A673 (cell line): ENCODE measurements at regions of chr21 and their contacts with region 1.

Region 1: DNA sequence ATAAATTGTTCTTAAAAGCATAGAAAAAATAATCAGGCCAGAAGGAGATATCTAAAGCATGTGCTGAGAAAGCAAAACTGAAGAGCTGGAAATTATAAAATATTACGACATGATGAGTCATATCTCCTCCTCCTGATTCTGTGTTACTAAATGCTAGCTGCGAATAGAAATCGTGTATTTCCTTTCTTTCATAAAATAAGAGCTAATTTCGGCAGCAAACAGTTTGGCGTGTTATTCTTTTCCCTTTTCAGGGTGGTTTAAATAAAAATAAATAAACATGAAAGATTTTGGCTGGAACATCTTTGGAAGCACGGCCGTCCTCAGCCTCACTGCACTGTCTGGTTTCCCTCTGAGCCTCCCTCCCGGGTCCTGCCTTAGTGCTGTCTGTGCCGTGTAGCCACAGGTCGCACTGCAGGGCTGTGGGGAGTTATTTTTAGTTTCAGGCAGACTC is 56.0 kb downstream of the ADARB1 start:
- DNase-seq: peak; percentile 68
- H3K4me3 ChIP-seq: peak overlapping the region; percentile 27
- H3K27ac ChIP-seq: peak overlapping the region; percentile 79
- H3K4me1 ChIP-seq: peaks cover 48% of the 10 kb centered on the region
- H3K27me3 ChIP-seq: no peaks in the 10 kb centered on the region
- CTCF ChIP-seq: no peak

Region 2: DNA sequence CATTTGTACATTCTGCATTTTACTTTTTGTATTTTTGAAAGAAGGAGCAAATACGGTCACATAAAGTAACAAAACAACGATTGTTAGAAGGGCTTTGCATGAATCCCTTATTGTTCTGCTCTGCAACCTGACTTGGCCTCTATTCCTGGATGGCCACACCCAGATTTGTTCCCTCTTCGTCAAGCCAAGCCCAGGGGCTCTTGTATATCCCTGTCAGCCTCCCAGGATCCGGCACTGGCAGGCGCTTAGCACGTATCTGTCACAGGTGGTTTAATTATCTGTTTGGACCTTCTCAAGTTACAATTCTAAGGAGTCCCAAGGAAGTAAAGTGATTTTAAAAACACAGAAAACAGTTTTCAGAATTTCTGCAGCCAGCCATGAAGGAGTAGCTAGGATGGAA is 1933.5 kb before region 1 on chr21:
- CTCF ChIA-PET with region 1: interaction called, 11 read pairs
- POLR2A ChIA-PET with region 1: no interaction called
- intact Hi-C with region 1: no loop called
- DNase-seq: no peak
- H3K4me3 ChIP-seq: no peak overlapping the region
- H3K27ac ChIP-seq: no peak overlapping the region
- H3K4me1 ChIP-seq: no peaks in the 10 kb centered on the region
- H3K27me3 ChIP-seq: no peaks in the 10 kb centered on the region
- CTCF ChIP-seq: no peak

Region 3: GRCh38 chr21:44801468-44802395 is 328.6 kb before region 1 on chr21 and contains the start of gene UBE2G2:
- CTCF ChIA-PET with region 1: no interaction called
- POLR2A ChIA-PET with region 1: no interaction called
- intact Hi-C with region 1: loop called (anchors 5 kb)
- DNase-seq: peak; percentile 93
- H3K4me3 ChIP-seq: peak within 1 kb of the TSS; percentile 67
- H3K27ac ChIP-seq: peak within 1 kb of the TSS; percentile 93
- H3K4me1 ChIP-seq: peaks cover 23% of the 10 kb centered on the region
- H3K27me3 ChIP-seq: no peaks in the 10 kb centered on the region
- CTCF ChIP-seq: no peak
- total RNA-seq, gene UBE2G2: 204 and 212 TPM in 2 replicates

Region 4: DNA sequence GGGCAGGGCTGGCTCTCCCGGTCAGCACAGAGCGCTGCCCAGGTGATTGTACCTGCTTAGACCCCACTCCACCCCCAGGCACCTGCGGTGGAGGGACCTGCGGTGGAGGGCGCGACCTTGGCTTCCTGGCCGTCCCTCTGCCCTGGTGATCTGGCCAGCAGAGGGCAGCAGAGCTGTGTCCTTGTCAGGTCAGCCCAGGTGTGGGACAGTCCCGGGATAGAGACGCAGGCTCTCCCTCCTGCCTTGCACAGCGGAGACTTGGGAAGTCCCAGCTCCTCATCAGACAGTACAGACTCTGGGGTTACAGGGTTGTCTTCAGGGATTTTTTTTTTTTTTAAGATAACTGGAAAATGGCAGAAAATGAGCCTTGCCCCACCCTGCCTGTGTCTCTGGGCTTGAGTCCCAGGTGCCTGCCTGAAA is 180.6 kb before region 1 on chr21:
- CTCF ChIA-PET with region 1: interaction called, 10 read pairs
- POLR2A ChIA-PET with region 1: no interaction called
- intact Hi-C with region 1: loop called (anchors 5 kb)
- DNase-seq: no peak
- H3K4me3 ChIP-seq: no peak overlapping the region
- H3K27ac ChIP-seq: no peak overlapping the region
- H3K4me1 ChIP-seq: peaks cover 13% of the 10 kb centered on the region
- H3K27me3 ChIP-seq: no peaks in the 10 kb centered on the region
- CTCF ChIP-seq: peak; percentile 81

Region 5: GRCh38 chr21:44958471-44959191 is 171.7 kb before region 1 on chr21:
- CTCF ChIA-PET with region 1: interaction called, 4 read pairs
- POLR2A ChIA-PET with region 1: no interaction called
- intact Hi-C with region 1: loop called (anchors 5 kb)
- DNase-seq: peak; percentile 90
- H3K4me3 ChIP-seq: no peak overlapping the region
- H3K27ac ChIP-seq: peak overlapping the region; percentile 69
- H3K4me1 ChIP-seq: peaks cover 47% of the 10 kb centered on the region
- H3K27me3 ChIP-seq: no peaks in the 10 kb centered on the region
- CTCF ChIP-seq: no peak

Region 6: GRCh38 chr21:45076245-45076711 is 54.1 kb before region 1 on chr21:
- CTCF ChIA-PET with region 1: interaction called, 4 read pairs
- POLR2A ChIA-PET with region 1: no interaction called
- intact Hi-C with region 1: loop called (anchors 2 kb)
- DNase-seq: peak; percentile 12
- H3K4me3 ChIP-seq: peak overlapping the region; percentile 63
- H3K27ac ChIP-seq: no peak overlapping the region
- H3K4me1 ChIP-seq: peaks cover 11% of the 10 kb centered on the region
- H3K27me3 ChIP-seq: no peaks in the 10 kb centered on the region
- CTCF ChIP-seq: no peak

Region 7: GRCh38 chr21:45102391-45102932 is 27.9 kb before region 1 on chr21:
- CTCF ChIA-PET with region 1: interaction called, 10 read pairs
- POLR2A ChIA-PET with region 1: no interaction called
- intact Hi-C with region 1: no loop called
- DNase-seq: peak; percentile 91
- H3K4me3 ChIP-seq: no peak overlapping the region
- H3K27ac ChIP-seq: peak overlapping the region; percentile 64
- H3K4me1 ChIP-seq: peaks cover 65% of the 10 kb centered on the region
- H3K27me3 ChIP-seq: no peaks in the 10 kb centered on the region
- CTCF ChIP-seq: peak; percentile 65

Region 8: GRCh38 chr21:45809421-45809820 is 679.1 kb after region 1 on chr21:
- CTCF ChIA-PET with region 1: no interaction called
- POLR2A ChIA-PET with region 1: no interaction called
- intact Hi-C with region 1: no loop called
- DNase-seq: no peak
- H3K4me3 ChIP-seq: no peak overlapping the region
- H3K27ac ChIP-seq: no peak overlapping the region
- H3K4me1 ChIP-seq: no peaks in the 10 kb centered on the region
- H3K27me3 ChIP-seq: no peaks in the 10 kb centered on the region
- CTCF ChIP-seq: no peak